ENCODE measurements at regions of chr18 and their contacts with region 1.

Region 1: GRCh38 chr18:42931491-42931890 is 184.0 kb downstream of the RIT2 start:
- DNase-seq: no peak
- H3K4me3 ChIP-seq: no peak overlapping the region
- H3K27ac ChIP-seq: no peak overlapping the region
- H3K4me1 ChIP-seq: peaks cover 2% of the 10 kb centered on the region
- H3K27me3 ChIP-seq: no peaks in the 10 kb centered on the region
- CTCF ChIP-seq: no peak
- EP300 ChIP-seq: no peak
- POLR2A ChIP-seq: no peak

Region 2: GRCh38 chr18:42893977-42894376 is 37.5 kb before region 1 on chr18:
- intact Hi-C with region 1: loop called in 1 of 4 experiments (anchors 2 kb)
- DNase-seq: no peak
- H3K4me3 ChIP-seq: no peak overlapping the region
- H3K27ac ChIP-seq: no peak overlapping the region
- H3K4me1 ChIP-seq: no peaks in the 10 kb centered on the region
- H3K27me3 ChIP-seq: no peaks in the 10 kb centered on the region
- CTCF ChIP-seq: no peak
- EP300 ChIP-seq: no peak
- POLR2A ChIP-seq: no peak

Region 3: DNA sequence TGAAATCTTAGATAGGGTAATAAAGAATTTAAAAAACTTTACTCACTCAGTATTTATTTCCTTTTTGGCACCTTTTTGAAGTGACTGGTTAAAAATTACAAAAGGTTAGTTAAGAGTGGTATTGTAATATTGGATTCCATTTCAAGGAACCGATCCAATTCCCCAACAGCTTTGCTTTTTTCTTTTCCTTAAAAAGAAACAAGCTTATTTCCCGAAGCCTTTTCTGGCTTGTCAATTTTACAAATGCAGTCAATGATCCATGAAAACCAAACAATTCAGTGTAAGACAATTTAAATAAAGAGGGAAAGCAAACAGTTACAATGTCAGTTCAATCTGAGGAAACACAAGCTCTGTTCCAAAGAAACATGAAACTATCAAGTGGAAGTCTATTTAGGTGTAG is 16.2 kb before region 1 on chr18:
- intact Hi-C with region 1: no loop called
- DNase-seq: no peak
- H3K4me3 ChIP-seq: no peak overlapping the region
- H3K27ac ChIP-seq: no peak overlapping the region
- H3K4me1 ChIP-seq: no peaks in the 10 kb centered on the region
- H3K27me3 ChIP-seq: no peaks in the 10 kb centered on the region
- CTCF ChIP-seq: no peak
- EP300 ChIP-seq: no peak
- POLR2A ChIP-seq: no peak

Region 4: DNA sequence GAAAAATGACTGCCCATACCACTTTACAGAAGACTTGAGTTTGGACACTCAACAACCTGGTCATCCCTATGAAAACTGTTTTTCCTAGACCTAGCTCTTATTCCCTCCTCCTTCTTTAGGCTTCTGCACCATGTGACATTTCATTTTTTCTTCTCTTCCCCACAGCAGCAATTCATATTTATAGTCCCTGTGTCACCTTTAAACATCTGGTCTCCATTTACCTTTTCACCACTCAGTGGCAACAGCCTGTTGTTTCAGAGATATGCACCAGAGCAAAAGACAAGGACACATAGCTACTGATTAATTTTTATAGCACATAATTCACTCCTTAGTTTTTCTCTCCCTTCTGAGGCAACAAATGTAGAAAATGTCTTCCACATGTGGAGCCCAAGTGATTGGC is 65.3 kb after region 1 on chr18:
- intact Hi-C with region 1: no loop called
- DNase-seq: no peak
- H3K4me3 ChIP-seq: no peak overlapping the region
- H3K27ac ChIP-seq: no peak overlapping the region
- H3K4me1 ChIP-seq: no peaks in the 10 kb centered on the region
- H3K27me3 ChIP-seq: no peaks in the 10 kb centered on the region
- CTCF ChIP-seq: no peak
- EP300 ChIP-seq: no peak
- POLR2A ChIP-seq: no peak

Region 5: GRCh38 chr18:43248610-43249249 is 317.2 kb after region 1 on chr18:
- intact Hi-C with region 1: no loop called
- DNase-seq: no peak
- H3K4me3 ChIP-seq: no peak overlapping the region
- H3K27ac ChIP-seq: no peak overlapping the region
- H3K4me1 ChIP-seq: no peaks in the 10 kb centered on the region
- H3K27me3 ChIP-seq: no peaks in the 10 kb centered on the region
- CTCF ChIP-seq: no peak
- EP300 ChIP-seq: no peak
- POLR2A ChIP-seq: no peak

Region 6: DNA sequence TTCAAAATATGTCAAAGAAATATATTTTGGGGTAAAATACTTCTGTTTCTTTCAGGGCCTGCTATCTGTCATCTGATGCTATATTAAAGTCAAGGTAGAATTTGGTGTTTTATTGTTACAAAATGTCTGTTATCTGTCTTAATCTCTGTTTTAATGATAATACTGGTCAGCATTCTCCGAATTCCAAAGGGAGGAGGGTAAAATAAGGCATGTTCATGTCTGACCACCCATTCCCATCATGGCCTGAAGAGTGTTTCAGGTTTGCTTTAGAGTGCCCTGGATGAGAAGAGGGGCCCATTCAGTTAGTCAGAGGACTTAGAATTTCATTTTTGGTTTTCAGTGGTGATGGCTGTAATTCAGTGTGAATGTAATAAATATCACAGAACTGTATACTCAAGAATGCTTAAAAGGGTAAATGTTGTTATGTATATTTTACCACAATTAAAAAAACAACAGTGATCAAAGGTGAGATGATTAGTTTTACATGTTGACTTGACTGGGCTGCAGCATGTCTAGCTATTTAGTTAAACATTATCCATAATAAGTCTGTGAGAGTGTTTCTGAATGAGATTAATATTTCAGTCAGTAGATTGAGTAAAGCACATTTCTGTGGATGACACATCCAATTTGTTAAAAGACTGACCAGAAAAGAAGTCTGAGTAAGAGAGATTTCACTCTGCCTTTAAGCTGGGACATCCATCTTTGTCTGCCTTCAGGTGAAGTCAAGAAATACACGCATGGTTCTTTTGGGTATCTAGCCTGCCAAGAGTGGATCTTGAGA is 813.7 kb after region 1 on chr18:
- intact Hi-C with region 1: no loop called
- DNase-seq: no peak
- H3K4me3 ChIP-seq: no peak overlapping the region
- H3K27ac ChIP-seq: no peak overlapping the region
- H3K4me1 ChIP-seq: no peaks in the 10 kb centered on the region
- H3K27me3 ChIP-seq: no peaks in the 10 kb centered on the region
- CTCF ChIP-seq: no peak
- EP300 ChIP-seq: no peak
- POLR2A ChIP-seq: no peak